Activated naive CD4-positive, alpha-beta T cell treated with anti-CD3 and anti-CD28 coated beads for 36 hours (primary cell): ENCODE measurements at regions of chr20 and their contacts with region 1.

Region 1: DNA sequence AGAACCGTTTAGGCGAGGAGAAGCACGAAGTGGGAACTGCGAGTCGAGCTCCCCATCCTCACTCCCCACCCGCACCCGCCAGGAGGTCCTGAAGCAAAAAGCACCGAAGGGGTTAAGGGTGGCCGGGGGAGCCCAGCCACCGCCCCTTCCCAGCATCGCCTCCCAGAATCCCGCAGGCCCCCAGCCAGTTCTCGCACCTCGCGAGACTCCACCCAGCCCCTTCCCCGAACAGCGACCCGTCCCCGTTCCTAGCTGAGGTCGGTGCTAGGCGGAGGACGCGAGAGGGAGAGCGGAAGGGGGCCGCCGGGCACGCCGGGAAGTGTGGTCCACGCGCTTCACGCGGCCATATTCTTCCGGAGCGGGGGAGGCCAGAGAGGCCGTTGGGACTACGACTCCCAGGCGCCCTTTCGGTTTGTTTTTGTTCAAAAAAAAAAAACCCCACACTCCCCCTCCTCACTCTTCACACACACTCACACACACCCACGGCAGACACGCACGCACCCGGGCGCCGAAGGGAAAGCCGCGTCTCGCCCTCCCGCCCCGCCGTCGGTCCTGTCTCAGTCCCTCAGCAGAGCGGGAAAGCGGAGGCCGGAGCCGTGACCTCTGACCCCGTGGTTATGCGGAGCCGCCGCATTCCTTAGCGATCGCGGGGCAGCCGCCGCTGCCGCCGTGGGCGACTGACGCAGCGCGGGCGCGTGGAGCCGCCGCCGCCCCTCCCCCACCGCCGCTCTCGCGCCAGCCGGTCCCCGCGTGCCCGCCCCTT is at the start of gene ASXL1:
- DNase-seq: peak; percentile 97
- H3K4me3 Mint-ChIP-seq: peak within 1 kb of the TSS; percentile 97
- H3K27ac Mint-ChIP-seq: peak within 1 kb of the TSS; percentile 100
- H3K4me1 Mint-ChIP-seq: peaks cover 67% of the 10 kb centered on the region
- H3K27me3 Mint-ChIP-seq: no peaks in the 10 kb centered on the region
- total RNA-seq, gene ASXL1: 155 to 162 TPM

Region 2: GRCh38 chr20:31723319-31724078 is 634.6 kb before region 1 on chr20:
- CTCF ChIA-PET with region 1: no interaction called
- intact Hi-C with region 1: loop called (anchors 1 kb)
- DNase-seq: peak; percentile 99
- H3K4me3 Mint-ChIP-seq: peak overlapping the region; percentile 95
- H3K27ac Mint-ChIP-seq: peak overlapping the region; percentile 99
- H3K4me1 Mint-ChIP-seq: peaks cover 5% of the 10 kb centered on the region
- H3K27me3 Mint-ChIP-seq: no peaks in the 10 kb centered on the region

Region 3: GRCh38 chr20:32231847-32232246 is 126.2 kb before region 1 on chr20:
- CTCF ChIA-PET with region 1: interaction called, 3 read pairs
- intact Hi-C with region 1: loop called (anchors 1 kb)
- DNase-seq: peak; percentile 75
- H3K4me3 Mint-ChIP-seq: peak overlapping the region; percentile 47
- H3K27ac Mint-ChIP-seq: peak overlapping the region; percentile 99
- H3K4me1 Mint-ChIP-seq: peaks cover 39% of the 10 kb centered on the region
- H3K27me3 Mint-ChIP-seq: no peaks in the 10 kb centered on the region

Region 4: GRCh38 chr20:32336918-32337347 is 21.1 kb before region 1 on chr20:
- CTCF ChIA-PET with region 1: interaction called, 4 read pairs
- intact Hi-C with region 1: loop called (anchors 1 kb)
- DNase-seq: no peak
- H3K4me3 Mint-ChIP-seq: no peak overlapping the region
- H3K27ac Mint-ChIP-seq: no peak overlapping the region
- H3K4me1 Mint-ChIP-seq: peaks cover 29% of the 10 kb centered on the region
- H3K27me3 Mint-ChIP-seq: no peaks in the 10 kb centered on the region

Region 5: DNA sequence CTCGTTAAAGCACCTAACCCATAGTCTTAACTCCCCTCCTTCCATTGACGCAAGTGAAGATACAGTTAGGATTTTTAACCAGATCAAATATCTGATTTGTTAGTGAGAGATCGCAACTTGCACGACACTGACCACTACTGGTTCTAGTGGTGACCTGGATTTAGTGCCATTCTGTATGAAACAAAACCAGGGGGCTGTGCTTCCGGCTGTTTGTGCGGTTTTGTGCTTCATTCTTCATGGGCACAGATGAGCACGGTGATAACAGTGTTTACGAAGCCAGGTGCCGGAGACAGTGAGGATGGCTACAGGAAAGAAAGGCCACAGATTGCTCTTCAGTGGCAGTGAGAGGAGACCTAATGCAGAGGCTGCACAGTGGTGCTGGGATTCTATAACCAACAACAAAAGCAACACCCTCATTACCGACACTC is 151.6 kb after region 1 on chr20:
- CTCF ChIA-PET with region 1: interaction called, 3 read pairs
- intact Hi-C with region 1: loop called (anchors 2 kb)
- DNase-seq: peak; percentile 82
- H3K4me3 Mint-ChIP-seq: peak overlapping the region; percentile 71
- H3K27ac Mint-ChIP-seq: peak overlapping the region; percentile 90
- H3K4me1 Mint-ChIP-seq: peaks cover 90% of the 10 kb centered on the region
- H3K27me3 Mint-ChIP-seq: no peaks in the 10 kb centered on the region

Region 6: GRCh38 chr20:32972181-32973076 is 614.4 kb after region 1 on chr20:
- CTCF ChIA-PET with region 1: no interaction called
- intact Hi-C with region 1: loop called (anchors 5 kb)
- DNase-seq: peak; percentile 94
- H3K4me3 Mint-ChIP-seq: no peak overlapping the region
- H3K27ac Mint-ChIP-seq: no peak overlapping the region
- H3K4me1 Mint-ChIP-seq: peaks cover 74% of the 10 kb centered on the region
- H3K27me3 Mint-ChIP-seq: no peaks in the 10 kb centered on the region